ENCODE measurements at regions of chr15 and their contacts with region 1.

Region 1: GRCh38 chr15:94119923-94120775 is 111.2 kb upstream of the MCTP2 start:
- DNase-seq: peak; percentile 48
- ATAC-seq: peak; percentile 95
- H3K4me3 Mint-ChIP-seq: no peak overlapping the region
- H3K27ac Mint-ChIP-seq: no peak overlapping the region
- H3K4me1 Mint-ChIP-seq: peaks cover 39% of the 10 kb centered on the region
- H3K27me3 Mint-ChIP-seq: no peaks in the 10 kb centered on the region
- CTCF ChIP-seq: peak; percentile 35; the same call in 1 of the 2 replicates

Region 2: GRCh38 chr15:93035953-93036800 is 1084.0 kb before region 1 on chr15:
- CTCF ChIA-PET with region 1: interaction called, 89 read pairs
- POLR2A ChIA-PET with region 1: interaction called, 4 read pairs
- DNase-seq: peak; percentile 46
- ATAC-seq: peak; percentile 46
- H3K4me3 Mint-ChIP-seq: no peak overlapping the region
- H3K27ac Mint-ChIP-seq: no peak overlapping the region
- H3K4me1 Mint-ChIP-seq: peaks cover 10% of the 10 kb centered on the region
- H3K27me3 Mint-ChIP-seq: no peaks in the 10 kb centered on the region
- CTCF ChIP-seq: peak; percentile 47

Region 3: DNA sequence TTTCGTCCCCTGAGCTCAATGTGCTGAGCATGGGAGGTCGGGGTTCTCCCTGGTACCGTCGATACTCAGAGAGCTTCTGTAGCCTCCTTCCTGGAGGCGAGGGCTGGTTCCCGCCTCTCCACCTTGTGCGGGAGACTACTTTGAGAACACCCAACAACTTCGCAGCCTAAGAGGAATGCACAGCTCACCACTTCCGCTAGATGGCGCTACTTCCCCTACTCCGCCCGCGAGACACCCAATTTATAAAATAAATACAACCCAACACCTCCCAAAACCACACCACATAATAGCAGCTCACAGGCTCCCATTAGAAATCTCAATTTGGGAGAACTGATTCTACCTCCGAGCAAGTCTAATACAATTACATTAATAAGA is 1032.3 kb before region 1 on chr15:
- CTCF ChIA-PET with region 1: interaction called, 23 read pairs
- POLR2A ChIA-PET with region 1: no interaction called
- DNase-seq: peak; percentile 85
- ATAC-seq: peak; percentile 67
- H3K4me3 Mint-ChIP-seq: peak overlapping the region; percentile 82
- H3K27ac Mint-ChIP-seq: no peak overlapping the region
- H3K4me1 Mint-ChIP-seq: peaks cover 35% of the 10 kb centered on the region
- H3K27me3 Mint-ChIP-seq: peaks cover 17% of the 10 kb centered on the region
- CTCF ChIP-seq: peak; percentile 88

Region 4: DNA sequence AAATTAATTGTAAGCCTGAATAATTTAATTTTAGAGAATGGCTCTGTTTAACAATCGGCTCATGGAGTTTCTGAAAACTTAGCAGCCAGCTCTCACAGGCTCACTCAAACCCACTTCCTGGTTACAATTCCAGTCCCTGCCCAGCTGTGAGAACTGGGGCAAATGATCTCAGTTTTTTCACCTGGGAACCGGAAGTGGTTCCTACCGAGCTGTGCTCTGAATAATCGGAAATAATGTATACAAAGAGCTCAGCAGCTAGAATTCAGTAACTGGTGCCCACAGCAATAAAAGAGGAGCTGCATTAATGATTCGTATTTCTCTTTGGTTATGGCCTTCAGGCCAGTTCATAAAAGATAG is 133.1 kb before region 1 on chr15:
- CTCF ChIA-PET with region 1: interaction called, 11 read pairs
- POLR2A ChIA-PET with region 1: no interaction called
- DNase-seq: no peak
- ATAC-seq: no peak
- H3K4me3 Mint-ChIP-seq: no peak overlapping the region
- H3K27ac Mint-ChIP-seq: no peak overlapping the region
- H3K4me1 Mint-ChIP-seq: no peaks in the 10 kb centered on the region
- H3K27me3 Mint-ChIP-seq: no peaks in the 10 kb centered on the region
- CTCF ChIP-seq: no peak

Region 5: GRCh38 chr15:94004697-94005096 is 115.5 kb before region 1 on chr15:
- CTCF ChIA-PET with region 1: interaction called, 75 read pairs
- POLR2A ChIA-PET with region 1: no interaction called
- DNase-seq: no peak
- ATAC-seq: no peak
- H3K4me3 Mint-ChIP-seq: no peak overlapping the region
- H3K27ac Mint-ChIP-seq: no peak overlapping the region
- H3K4me1 Mint-ChIP-seq: no peaks in the 10 kb centered on the region; the same call in 1 of the 2 replicates
- H3K27me3 Mint-ChIP-seq: no peaks in the 10 kb centered on the region
- CTCF ChIP-seq: no peak

Region 6: GRCh38 chr15:94107652-94108051 is 12.5 kb before region 1 on chr15:
- CTCF ChIA-PET with region 1: interaction called, 13 read pairs
- POLR2A ChIA-PET with region 1: no interaction called
- DNase-seq: no peak
- ATAC-seq: no peak
- H3K4me3 Mint-ChIP-seq: no peak overlapping the region
- H3K27ac Mint-ChIP-seq: no peak overlapping the region
- H3K4me1 Mint-ChIP-seq: peaks cover 32% of the 10 kb centered on the region
- H3K27me3 Mint-ChIP-seq: no peaks in the 10 kb centered on the region; the same call in 1 of the 2 replicates
- CTCF ChIP-seq: no peak

Region 7: GRCh38 chr15:94346282-94346681 is 226.1 kb after region 1 on chr15:
- CTCF ChIA-PET with region 1: no interaction called
- POLR2A ChIA-PET with region 1: no interaction called
- DNase-seq: no peak
- ATAC-seq: no peak
- H3K4me3 Mint-ChIP-seq: no peak overlapping the region
- H3K27ac Mint-ChIP-seq: no peak overlapping the region
- H3K4me1 Mint-ChIP-seq: no peaks in the 10 kb centered on the region
- H3K27me3 Mint-ChIP-seq: no peaks in the 10 kb centered on the region
- CTCF ChIP-seq: no peak